B cell (primary cell): ENCODE measurements at regions of chr16 and their contacts with region 1.

Region 1: DNA sequence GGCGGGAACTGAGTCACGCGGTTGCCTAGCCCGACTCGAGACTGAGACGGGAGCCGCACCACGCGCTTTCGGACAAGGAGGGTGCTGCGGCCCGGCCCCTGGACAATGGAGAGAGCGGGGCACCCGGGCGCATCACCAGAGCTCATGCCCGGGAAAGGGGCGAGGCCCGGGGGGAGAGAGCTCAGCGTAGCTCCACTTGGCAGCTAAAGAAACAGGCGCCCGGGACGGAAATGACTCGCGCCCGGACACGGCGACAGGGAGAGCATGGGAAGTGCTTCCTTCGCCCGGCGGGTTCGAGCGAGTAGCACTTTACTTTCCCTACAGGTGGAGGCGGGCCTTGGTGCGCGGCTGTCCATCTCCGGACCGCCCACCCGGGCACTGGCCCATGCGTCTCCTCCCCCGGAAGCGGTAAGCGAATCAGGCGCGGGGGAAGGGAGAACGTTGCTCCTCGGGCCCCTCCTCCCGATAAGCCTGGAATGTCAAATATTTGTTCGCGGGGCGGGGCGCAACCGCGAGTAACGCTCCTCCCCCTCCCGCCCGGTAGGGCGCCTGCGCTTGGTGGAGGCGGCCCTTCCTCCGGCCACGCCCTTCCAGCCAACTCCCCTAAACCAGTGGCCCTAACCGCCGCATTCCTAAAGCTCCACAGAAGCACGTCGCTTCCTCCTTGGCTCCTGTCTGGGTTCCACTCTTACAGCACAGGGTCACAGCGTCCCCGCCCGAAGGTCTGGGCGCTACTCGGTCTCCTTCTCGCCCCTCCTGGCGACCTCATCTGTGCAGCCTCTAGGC is 1.5 kb upstream of the ESRP2 start:
- DNase-seq: peak; percentile 88
- ATAC-seq: peak; percentile 81
- H3K4me3 ChIP-seq: peak overlapping the region; percentile 58 to 76 (median 68)
- H3K4me3 Mint-ChIP-seq: peak overlapping the region; percentile 98
- H3K27ac ChIP-seq: no peak overlapping the region
- H3K27ac Mint-ChIP-seq: peak overlapping the region; percentile 83
- H3K4me1 ChIP-seq: peaks cover 22 to 42% of the 10 kb centered on the region in 2 donors
- H3K4me1 Mint-ChIP-seq: peaks cover 39% of the 10 kb centered on the region
- H3K27me3 ChIP-seq: no peaks in the 10 kb centered on the region
- H3K27me3 Mint-ChIP-seq: no peaks in the 10 kb centered on the region
- CTCF ChIP-seq: no peak

Region 2: GRCh38 chr16:67833418-67834241 is 403.8 kb before region 1 on chr16:
- CTCF ChIA-PET with region 1: no interaction called
- POLR2A ChIA-PET with region 1: no interaction called
- intact Hi-C with region 1: loop called (anchors 5 kb)
- DNase-seq: peak; percentile 92
- ATAC-seq: peak; percentile 100
- H3K4me3 ChIP-seq: peak overlapping the region; percentile 47 to 76 (median 75)
- H3K4me3 Mint-ChIP-seq: peak overlapping the region; percentile 89
- H3K27ac ChIP-seq: peak overlapping the region in 1 of 2 donors; percentile 64
- H3K27ac Mint-ChIP-seq: peak overlapping the region; percentile 83
- H3K4me1 ChIP-seq: peaks cover 12 to 16% of the 10 kb centered on the region in 2 donors
- H3K4me1 Mint-ChIP-seq: peaks cover 16% of the 10 kb centered on the region
- H3K27me3 ChIP-seq: no peaks in the 10 kb centered on the region
- H3K27me3 Mint-ChIP-seq: no peaks in the 10 kb centered on the region
- CTCF ChIP-seq: no peak

Region 3: GRCh38 chr16:68257906-68258800 is 20.7 kb after region 1 on chr16:
- CTCF ChIA-PET with region 1: interaction called, 32 read pairs
- POLR2A ChIA-PET with region 1: no interaction called
- intact Hi-C with region 1: loop called (anchors 1 kb)
- DNase-seq: no peak
- ATAC-seq: peak; percentile 4
- H3K4me3 ChIP-seq: no peak overlapping the region
- H3K4me3 Mint-ChIP-seq: peak overlapping the region; percentile 41
- H3K27ac ChIP-seq: peak overlapping the region; percentile 50 to 55
- H3K27ac Mint-ChIP-seq: peak overlapping the region; percentile 90
- H3K4me1 ChIP-seq: peaks cover 20 to 37% of the 10 kb centered on the region in 2 donors
- H3K4me1 Mint-ChIP-seq: peaks cover 30% of the 10 kb centered on the region
- H3K27me3 ChIP-seq: no peaks in the 10 kb centered on the region
- H3K27me3 Mint-ChIP-seq: no peaks in the 10 kb centered on the region
- CTCF ChIP-seq: no peak

Region 4: DNA sequence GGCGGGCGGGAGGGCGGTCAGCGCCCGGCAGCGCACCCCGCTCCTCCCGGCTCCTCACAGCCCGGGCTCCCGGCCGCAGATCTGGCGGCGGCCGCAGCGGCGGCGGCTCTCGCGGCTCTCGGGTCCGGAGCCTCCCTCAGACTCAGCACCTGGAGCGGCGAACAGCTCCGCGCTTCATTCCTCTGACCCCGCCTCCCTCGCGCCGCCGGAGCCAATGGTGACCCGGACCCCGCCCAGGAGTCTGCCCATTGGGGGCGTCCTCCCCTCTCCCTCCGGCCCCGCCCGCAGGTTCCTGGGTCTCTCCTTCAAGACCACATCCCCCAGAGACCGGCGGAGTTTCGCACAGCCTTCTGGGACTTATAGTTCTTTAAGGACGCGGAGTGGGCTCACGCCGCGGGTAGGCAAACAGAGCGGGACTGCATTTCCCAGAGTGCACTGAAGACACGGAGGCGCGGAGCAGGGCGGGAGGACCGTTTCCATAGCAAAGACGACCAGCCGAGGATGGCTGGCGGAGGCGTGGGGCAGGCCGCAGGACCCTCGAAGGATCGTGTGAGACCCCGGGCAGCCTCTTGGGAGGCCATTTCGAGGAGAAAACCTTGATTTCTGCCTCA is 211.0 kb after region 1 on chr16 and contains the start of gene SMPD3:
- CTCF ChIA-PET with region 1: no interaction called
- POLR2A ChIA-PET with region 1: no interaction called
- intact Hi-C with region 1: loop called (anchors 1 kb)
- DNase-seq: peak; percentile 97
- ATAC-seq: peak; percentile 97
- H3K4me3 ChIP-seq: peak within 1 kb of the TSS; percentile 16 to 66 (median 53)
- H3K4me3 Mint-ChIP-seq: peak within 1 kb of the TSS; percentile 77
- H3K27ac ChIP-seq: no peak within 1 kb of the TSS
- H3K27ac Mint-ChIP-seq: peak within 1 kb of the TSS; percentile 43
- H3K4me1 ChIP-seq: peaks cover 20 to 22% of the 10 kb centered on the region in 2 donors
- H3K4me1 Mint-ChIP-seq: peaks cover 16% of the 10 kb centered on the region
- H3K27me3 ChIP-seq: peaks cover 0 to 31% (median 28%) of the 10 kb centered on the region in 4 experiments
- H3K27me3 Mint-ChIP-seq: peaks cover 22% of the 10 kb centered on the region
- CTCF ChIP-seq: no peak
- total RNA-seq, gene SMPD3: 1.2 and 1.3 TPM in 2 replicates